Endothelial cell of umbilical vein (primary cell): ENCODE measurements at regions of chr11 and their contacts with region 1.

Region 1: DNA sequence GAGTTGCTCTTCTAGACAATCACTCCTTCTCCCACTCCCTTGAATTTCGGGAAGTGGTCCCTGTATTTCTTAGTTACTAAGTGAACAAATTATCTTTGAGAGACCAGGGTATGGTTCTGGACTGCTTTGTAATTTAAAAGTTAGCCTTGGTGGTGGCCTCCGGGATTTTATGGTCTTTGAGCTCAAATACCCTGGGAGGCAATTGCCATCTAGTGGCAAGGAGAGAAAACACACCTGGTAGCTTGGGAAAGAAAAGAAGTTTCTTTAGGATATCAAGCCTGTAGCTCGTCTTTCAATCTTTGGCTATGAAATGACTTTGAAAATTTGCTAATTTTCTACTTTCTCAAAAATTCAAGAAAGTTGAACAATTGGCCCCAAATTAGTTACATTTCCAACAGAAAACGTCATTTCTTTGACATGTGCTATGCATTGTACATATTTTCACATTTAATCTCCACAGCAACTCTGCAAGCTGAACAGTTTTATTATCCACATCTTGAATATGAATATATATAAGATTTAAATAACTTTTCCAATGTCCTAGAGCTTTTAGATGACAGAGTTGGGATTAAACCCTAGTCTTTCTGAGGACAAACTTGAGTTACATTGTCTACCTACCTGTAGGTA is 39.1 kb downstream of the MMP27 start:
- DNase-seq: peak; percentile 50
- H3K4me3 ChIP-seq: no peak overlapping the region
- H3K27ac ChIP-seq: no peak overlapping the region
- H3K4me1 ChIP-seq: no peaks in the 10 kb centered on the region
- H3K27me3 ChIP-seq: no peaks in the 10 kb centered on the region
- CTCF ChIP-seq: peak; percentile 64 to 76
- POLR2A ChIP-seq: no peak

Region 2: DNA sequence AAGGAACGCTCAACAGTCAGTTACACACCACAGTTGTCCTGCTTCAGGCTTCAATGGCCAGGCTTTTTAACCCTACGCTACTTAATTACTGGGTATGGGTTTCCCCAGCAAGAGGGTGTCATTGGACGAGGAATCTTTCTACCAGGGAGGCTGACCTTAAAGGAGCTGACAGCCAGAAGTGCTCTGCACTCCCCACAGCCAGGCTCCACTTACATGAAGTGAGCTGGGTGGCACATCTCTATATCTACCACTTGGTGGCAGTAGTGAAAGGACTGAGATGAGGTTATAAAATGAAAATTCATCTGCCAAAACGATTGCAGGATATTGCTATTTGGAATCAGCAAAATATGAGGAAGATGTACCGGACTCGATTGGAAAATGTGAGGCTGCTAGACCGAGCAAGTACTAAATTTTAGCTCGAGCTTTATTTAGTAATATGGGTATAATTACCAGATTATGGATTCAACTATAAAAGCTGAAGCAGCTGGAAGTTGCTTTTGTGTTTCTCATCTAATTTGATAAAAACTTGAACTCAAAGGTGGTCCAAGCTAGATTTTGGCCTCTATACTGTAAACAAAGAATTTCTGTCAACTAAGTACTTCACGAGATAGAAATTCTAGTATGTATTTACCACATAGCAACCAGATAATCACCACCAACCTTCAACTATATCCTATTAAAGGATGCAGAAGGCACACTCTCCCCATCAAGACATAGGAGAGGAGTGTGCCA is 805.6 kb before region 1 on chr11:
- CTCF ChIA-PET with region 1: interaction called, 11 read pairs
- POLR2A ChIA-PET with region 1: no interaction called
- dilution Hi-C with region 1: no loop called
- intact Hi-C with region 1: no loop called
- DNase-seq: peak; percentile 58
- H3K4me3 ChIP-seq: no peak overlapping the region
- H3K27ac ChIP-seq: no peak overlapping the region
- H3K4me1 ChIP-seq: peaks cover 31% of the 10 kb centered on the region
- H3K27me3 ChIP-seq: no peaks in the 10 kb centered on the region
- CTCF ChIP-seq: peak; percentile 67 to 76
- POLR2A ChIP-seq: no peak

Region 3: DNA sequence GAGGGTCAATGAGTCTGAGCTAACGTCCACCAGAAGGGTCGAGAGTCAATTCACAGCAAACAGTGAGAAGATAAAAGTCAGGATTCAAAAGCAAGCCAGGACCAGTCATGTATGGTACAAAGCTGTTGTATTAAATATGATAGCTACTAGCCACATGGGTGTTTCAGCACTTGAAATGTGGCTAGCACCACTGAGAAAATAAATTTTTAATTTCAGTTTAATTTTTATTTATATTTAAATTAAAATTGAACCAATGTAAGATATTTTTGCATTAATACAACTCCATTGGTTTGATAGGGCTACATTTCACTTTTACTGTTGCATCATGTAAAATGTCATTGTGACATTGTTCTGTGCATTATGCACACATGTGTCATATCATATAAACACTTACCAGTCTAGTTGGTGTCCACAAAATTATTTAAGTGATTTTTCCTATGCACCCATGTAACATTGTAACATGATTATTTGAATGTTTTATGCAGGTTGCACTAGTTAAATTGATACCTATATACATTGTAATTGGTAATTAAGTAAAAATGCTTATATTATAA is 358.9 kb before region 1 on chr11:
- CTCF ChIA-PET with region 1: no interaction called
- POLR2A ChIA-PET with region 1: no interaction called
- dilution Hi-C with region 1: no loop called
- intact Hi-C with region 1: no loop called
- DNase-seq: no peak
- H3K4me3 ChIP-seq: no peak overlapping the region
- H3K27ac ChIP-seq: no peak overlapping the region
- H3K4me1 ChIP-seq: no peaks in the 10 kb centered on the region
- H3K27me3 ChIP-seq: peaks cover 15 to 18% of the 10 kb centered on the region in 2 experiments
- CTCF ChIP-seq: no peak
- POLR2A ChIP-seq: no peak

Region 4: DNA sequence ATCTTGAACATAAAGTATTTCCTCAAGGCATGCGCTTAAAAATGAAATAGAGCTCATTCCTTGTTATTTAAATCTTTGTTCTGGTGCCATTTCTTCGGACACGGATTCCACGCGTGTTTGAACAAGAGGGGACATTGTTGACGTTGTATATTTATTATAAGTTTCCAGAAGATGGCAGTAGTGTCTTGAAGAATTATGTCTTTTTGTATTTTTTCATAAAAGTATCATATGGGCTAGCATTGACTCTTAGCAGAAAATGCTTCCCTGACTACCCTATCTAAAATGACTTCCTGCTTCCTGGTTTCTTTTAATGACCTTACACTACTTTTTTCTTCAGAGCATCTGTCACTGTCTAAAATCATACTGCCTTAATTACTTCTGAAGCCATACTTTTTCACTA is 299.1 kb before region 1 on chr11:
- CTCF ChIA-PET with region 1: interaction called, 58 read pairs
- POLR2A ChIA-PET with region 1: no interaction called
- dilution Hi-C with region 1: no loop called
- intact Hi-C with region 1: no loop called
- DNase-seq: peak; percentile 66
- H3K4me3 ChIP-seq: no peak overlapping the region
- H3K27ac ChIP-seq: no peak overlapping the region
- H3K4me1 ChIP-seq: peaks cover 9% of the 10 kb centered on the region
- H3K27me3 ChIP-seq: no peaks in the 10 kb centered on the region
- CTCF ChIP-seq: no peak
- POLR2A ChIP-seq: no peak

Region 5: DNA sequence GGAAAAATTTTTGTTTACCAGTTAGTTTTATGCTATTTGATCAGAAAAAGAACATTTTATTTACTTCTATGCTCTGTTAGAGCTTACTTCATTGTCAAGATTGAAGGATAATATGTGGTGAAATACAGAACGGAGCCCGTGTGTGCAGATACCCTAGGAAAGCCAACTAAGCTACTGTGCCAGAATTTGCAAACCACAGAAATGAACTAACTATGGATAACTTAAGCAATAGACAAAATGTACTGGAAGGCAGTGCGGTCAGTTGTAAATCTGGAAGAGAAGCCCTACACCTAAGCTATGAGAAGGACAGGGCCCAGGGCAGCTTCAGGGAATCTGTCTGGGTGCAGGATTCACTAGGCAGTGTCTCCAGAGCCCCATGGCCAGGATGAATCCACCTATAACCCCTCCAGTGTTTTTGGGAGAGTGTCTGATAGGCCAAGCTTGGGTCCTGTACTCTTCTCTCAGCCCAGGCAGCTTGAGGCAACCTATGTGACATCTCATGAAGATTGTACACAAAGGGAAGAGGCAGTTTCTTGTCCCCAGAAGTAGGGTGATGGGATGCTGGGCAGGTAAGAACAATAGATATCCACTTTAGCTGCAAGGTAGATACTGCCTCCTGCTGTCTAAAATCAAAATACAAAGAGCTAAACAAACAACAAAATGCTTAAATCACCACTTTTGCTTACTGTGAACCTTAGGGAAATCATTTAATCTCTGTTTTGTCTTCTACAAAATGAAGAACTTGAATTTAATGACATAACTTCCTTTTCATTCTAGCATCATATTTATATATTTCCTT is 147.9 kb before region 1 on chr11:
- CTCF ChIA-PET with region 1: interaction called, 11 read pairs
- POLR2A ChIA-PET with region 1: no interaction called
- dilution Hi-C with region 1: no loop called
- intact Hi-C with region 1: loop called (anchors 5 kb)
- DNase-seq: no peak
- H3K4me3 ChIP-seq: no peak overlapping the region
- H3K27ac ChIP-seq: no peak overlapping the region
- H3K4me1 ChIP-seq: no peaks in the 10 kb centered on the region
- H3K27me3 ChIP-seq: no peaks in the 10 kb centered on the region
- CTCF ChIP-seq: no peak
- POLR2A ChIP-seq: no peak

Region 6: GRCh38 chr11:102614485-102614884 is 52.0 kb before region 1 on chr11:
- CTCF ChIA-PET with region 1: interaction called, 83 read pairs
- POLR2A ChIA-PET with region 1: no interaction called
- dilution Hi-C with region 1: no loop called
- intact Hi-C with region 1: no loop called
- DNase-seq: no peak
- H3K4me3 ChIP-seq: no peak overlapping the region
- H3K27ac ChIP-seq: no peak overlapping the region
- H3K4me1 ChIP-seq: peaks cover 11% of the 10 kb centered on the region
- H3K27me3 ChIP-seq: no peaks in the 10 kb centered on the region
- CTCF ChIP-seq: no peak
- POLR2A ChIP-seq: no peak

Region 7: DNA sequence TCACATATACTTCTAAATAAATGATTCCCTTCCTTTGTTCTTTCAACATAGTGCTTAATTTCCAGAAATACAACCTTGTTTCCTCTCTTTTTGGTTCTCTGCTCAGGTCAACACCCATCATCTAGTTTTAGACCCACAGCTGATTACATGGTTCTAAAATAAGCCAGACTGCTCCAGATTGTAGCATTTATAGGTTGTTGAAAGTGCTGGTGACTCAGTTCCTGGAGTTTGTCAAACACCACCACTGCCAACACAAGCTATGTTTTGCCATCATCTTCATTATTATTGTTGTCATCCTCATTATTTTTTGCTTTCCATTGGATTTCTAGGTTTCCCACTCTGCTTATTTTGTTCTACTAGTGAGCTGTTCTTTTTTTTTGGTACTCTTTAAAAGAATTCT is 19.0 kb before region 1 on chr11:
- CTCF ChIA-PET with region 1: interaction called, 16 read pairs
- POLR2A ChIA-PET with region 1: no interaction called
- dilution Hi-C with region 1: no loop called
- intact Hi-C with region 1: no loop called
- DNase-seq: peak; percentile 17
- H3K4me3 ChIP-seq: no peak overlapping the region
- H3K27ac ChIP-seq: no peak overlapping the region
- H3K4me1 ChIP-seq: no peaks in the 10 kb centered on the region
- H3K27me3 ChIP-seq: no peaks in the 10 kb centered on the region
- CTCF ChIP-seq: no peak
- POLR2A ChIP-seq: no peak